Activated CD8-positive, alpha-beta T cell treated with anti-CD3 and anti-CD28 coated beads, Interleukin-2, amount 10 ng/mL, durations not matched to agents 7 days and 5 days (primary cell): ENCODE measurements at regions of chr17 and their contacts with region 1.

Region 1: GRCh38 chr17:48944519-48945260 is at the start of gene SNF8:
- DNase-seq: peak; percentile 96
- ATAC-seq: peak; percentile 96
- H3K4me3 Mint-ChIP-seq: peak within 1 kb of the TSS; percentile 96
- H3K27ac Mint-ChIP-seq: peak within 1 kb of the TSS; percentile 98
- H3K4me1 Mint-ChIP-seq: peaks cover 25% of the 10 kb centered on the region
- H3K27me3 Mint-ChIP-seq: peaks cover 3% of the 10 kb centered on the region
- total RNA-seq, gene SNF8: 124 to 125 TPM

Region 2: DNA sequence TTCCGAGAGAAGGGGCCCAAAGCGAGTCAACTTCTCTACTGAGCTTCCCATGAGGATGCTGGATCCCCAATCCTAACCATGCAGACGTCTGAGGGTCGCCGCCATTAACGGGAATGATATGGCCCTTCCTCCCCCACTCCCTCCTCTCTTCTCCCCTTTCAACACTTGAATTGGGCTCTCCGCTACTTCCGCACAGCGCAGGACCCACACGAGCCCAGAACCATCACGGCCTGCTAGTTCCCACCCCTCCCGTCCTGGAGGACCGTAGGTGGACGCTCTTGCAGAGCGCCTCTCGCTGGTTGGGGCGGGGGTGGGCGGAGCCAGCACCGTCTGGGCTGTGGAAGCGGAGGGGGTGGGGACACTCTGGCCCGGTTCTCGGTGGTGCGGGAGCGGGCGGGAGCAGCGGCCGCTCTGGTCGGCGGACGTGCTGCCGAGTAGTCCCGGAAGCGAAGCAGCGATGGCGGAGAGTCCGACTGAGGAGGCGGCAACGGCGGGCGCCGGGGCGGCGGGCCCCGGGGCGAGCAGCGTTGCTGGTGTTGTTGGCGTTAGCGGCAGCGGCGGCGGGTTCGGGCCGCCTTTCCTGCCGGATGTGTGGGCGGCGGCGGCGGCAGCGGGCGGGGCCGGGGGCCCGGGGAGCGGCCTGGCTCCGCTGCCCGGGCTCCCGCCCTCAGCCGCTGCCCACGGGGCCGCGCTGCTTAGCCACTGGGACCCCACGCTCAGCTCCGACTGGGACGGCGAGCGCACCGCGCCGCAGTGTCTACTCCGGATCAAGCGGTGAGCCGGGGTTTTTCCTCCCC is 36.4 kb before region 1 on chr17 and contains the start of gene UBE2Z:
- CTCF ChIA-PET with region 1: no interaction called
- POLR2A ChIA-PET with region 1: interaction called, 20 read pairs
- DNase-seq: peak; percentile 91
- ATAC-seq: peak; percentile 90
- H3K4me3 Mint-ChIP-seq: peak within 1 kb of the TSS; percentile 99
- H3K27ac Mint-ChIP-seq: peak within 1 kb of the TSS; percentile 97
- H3K4me1 Mint-ChIP-seq: peaks cover 49% of the 10 kb centered on the region
- H3K27me3 Mint-ChIP-seq: no peaks in the 10 kb centered on the region
- total RNA-seq, gene UBE2Z: 61.8 to 62.4 TPM

Region 3: DNA sequence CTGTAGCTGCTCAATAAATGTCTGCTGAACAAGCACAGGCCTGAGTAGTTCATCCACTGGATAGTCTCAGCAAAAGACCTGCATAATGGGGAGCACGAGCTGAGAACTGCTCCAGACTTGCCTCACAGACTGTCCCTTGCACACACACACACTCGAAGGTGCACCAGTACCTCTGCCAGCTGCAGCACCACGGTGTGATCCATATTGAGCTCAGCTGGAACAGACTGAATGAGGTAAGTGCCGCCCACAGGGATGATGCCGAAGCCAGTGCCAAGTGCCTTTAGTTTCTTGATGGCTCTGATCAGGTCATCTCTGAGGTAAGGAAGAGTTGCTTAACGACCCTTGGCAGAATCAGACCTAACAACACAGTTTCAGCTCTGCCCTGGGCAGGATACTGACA is 11.7 kb before region 1 on chr17:
- CTCF ChIA-PET with region 1: no interaction called
- POLR2A ChIA-PET with region 1: interaction called, 21 read pairs
- DNase-seq: no peak
- ATAC-seq: no peak
- H3K4me3 Mint-ChIP-seq: no peak overlapping the region
- H3K27ac Mint-ChIP-seq: peak overlapping the region; percentile 46
- H3K4me1 Mint-ChIP-seq: no peaks in the 10 kb centered on the region
- H3K27me3 Mint-ChIP-seq: no peaks in the 10 kb centered on the region